MCF 10A (cell line): ENCODE measurements at regions of chr20 and their contacts with region 1.

Region 1: DNA sequence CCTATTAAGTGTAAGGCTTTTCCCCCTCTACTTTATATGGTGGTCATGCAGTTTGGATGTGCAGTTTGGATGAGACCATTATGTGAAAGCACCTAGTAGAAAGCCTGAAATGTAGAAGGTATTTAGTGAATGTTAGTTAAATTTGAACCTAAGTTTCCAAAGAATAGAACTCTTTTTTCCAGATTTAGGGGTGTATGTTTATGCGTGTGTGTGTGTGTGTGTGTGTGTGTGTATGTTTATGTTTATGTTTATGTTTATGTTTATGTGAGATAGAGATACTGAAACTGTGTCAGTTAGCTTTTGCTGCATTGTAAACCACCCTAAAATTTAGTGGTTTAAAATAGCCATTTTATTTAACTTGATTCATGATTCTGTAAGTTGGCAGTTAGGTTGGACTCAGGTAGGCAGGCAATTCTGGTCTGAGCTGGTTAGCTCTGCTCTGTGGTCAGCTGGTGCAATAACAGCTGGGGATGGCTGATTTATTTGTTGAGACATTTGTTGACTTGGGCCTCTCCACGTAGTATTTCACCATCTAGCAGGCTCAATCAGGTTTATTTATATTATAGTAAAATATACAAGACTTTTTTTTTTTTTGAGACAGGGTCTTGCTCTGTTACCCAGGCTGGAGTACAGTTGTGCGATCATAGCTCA is 54.0 kb downstream of the STK4 start:
- DNase-seq: peak; percentile 76
- H3K4me3 Mint-ChIP-seq: no peak overlapping the region
- H3K27ac Mint-ChIP-seq: peak overlapping the region; percentile 65
- H3K4me1 Mint-ChIP-seq: peaks cover 28% of the 10 kb centered on the region
- H3K27me3 Mint-ChIP-seq: no peaks in the 10 kb centered on the region
- CTCF ChIP-seq: no peak

Region 2: GRCh38 chr20:45036044-45036755 is 15.8 kb after region 1 on chr20:
- CTCF ChIA-PET with region 1: interaction called, 8 read pairs
- POLR2A ChIA-PET with region 1: interaction called, 80 read pairs
- intact Hi-C with region 1: no loop called
- DNase-seq: peak; percentile 85
- H3K4me3 Mint-ChIP-seq: peak overlapping the region; percentile 60
- H3K27ac Mint-ChIP-seq: peak overlapping the region; percentile 95
- H3K4me1 Mint-ChIP-seq: peaks cover 57% of the 10 kb centered on the region
- H3K27me3 Mint-ChIP-seq: no peaks in the 10 kb centered on the region
- CTCF ChIP-seq: no peak